ENCODE measurements at regions of chr15 and their contacts with region 1.

Region 1: GRCh38 chr15:92521624-92522008 is 127.9 kb downstream of the ST8SIA2 start:
- DNase-seq: peak; percentile 22 to 91 (median 79)

Region 2: GRCh38 chr15:92400980-92401787 is 120.4 kb before region 1 on chr15:
- intact Hi-C with region 1: no loop called
- DNase-seq: peak in 9 of 42 donors; percentile 17 to 52 (median 28)

Region 3: DNA sequence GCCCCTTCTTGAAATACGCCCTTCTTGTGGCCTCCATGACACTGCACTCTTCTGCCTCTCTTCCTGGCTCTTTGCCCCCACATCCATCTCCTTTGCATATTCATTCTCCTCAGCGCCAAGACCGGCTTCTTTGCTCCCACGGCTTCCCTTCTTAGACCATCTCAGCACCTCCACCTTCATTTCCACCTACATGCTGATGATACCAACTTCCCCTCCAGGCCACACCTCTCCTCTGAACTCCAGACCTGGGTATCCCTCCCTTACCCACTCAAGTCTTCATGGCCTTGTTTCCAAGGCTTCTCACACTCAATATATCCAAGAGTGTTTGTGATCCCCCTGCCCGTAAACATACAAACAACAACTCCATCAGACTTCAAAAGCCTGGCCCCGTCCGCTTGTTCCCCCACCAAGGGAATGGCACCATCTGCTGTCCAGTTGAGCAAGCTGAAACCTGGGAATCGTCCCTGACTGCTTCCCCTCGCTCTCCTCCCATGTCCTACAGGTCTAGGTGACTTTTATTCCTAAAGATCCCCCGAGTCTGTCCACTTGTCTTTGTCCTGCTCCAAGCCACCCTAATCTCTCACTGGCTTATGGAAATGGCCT is 161.7 kb after region 1 on chr15:
- intact Hi-C with region 1: loop called (anchors 10 kb)
- DNase-seq: peak in 39 of 42 donors; percentile 7 to 88 (median 55)